ENCODE measurements at regions of chr10 and their contacts with region 1.

Region 1: GRCh38 chr10:119131512-119132240 is 27.8 kb downstream of the DENND10 start:
- DNase-seq: no peak
- ATAC-seq: peak; percentile 98
- H3K4me3 Mint-ChIP-seq: peak overlapping the region; percentile 81
- H3K27ac Mint-ChIP-seq: peak overlapping the region; percentile 92
- H3K4me1 Mint-ChIP-seq: peaks cover 53% of the 10 kb centered on the region
- H3K27me3 Mint-ChIP-seq: no peaks in the 10 kb centered on the region

Region 2: DNA sequence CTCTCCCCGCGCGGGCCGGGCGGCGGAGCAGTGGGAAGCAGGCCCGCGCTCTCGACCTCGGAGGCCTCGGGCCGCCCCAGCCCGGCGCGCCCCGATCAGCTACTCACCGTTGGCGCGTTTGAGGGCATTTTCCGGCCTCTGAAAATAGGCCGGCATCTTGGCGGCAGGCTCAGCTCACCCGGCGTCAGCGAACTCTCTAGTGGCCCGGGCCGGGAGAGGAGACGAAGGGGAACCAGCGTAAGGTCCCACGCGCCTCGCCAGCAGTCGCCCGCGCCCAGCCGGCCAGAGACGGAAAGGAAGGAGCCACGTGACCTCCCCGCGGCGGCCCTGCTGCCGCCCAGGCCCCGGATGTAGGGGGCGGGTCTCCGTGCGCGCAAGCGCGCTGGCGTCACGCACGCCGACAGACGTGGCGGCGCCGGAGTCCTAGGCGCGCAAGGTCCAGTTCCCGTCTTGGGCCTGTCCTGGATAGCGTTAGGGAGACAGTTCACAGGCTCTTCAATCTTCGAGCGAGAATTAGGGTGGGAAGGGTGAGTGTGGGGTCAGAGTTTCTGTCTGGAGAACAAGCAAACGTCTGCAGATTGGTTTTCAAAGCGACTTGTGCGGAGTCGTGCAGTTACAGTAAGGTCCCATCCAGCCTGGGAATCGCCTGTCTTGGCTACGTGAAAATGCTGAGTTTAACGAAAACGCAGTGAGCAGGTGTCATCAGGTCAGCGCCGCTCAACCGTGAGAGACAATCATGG is 51.0 kb before region 1 on chr10 and contains the start of gene EIF3A:
- POLR2A ChIA-PET with region 1: interaction called, 13 read pairs
- DNase-seq: peak; percentile 98
- ATAC-seq: peak; percentile 78
- H3K4me3 Mint-ChIP-seq: peak within 1 kb of the TSS; percentile 95
- H3K27ac Mint-ChIP-seq: peak within 1 kb of the TSS; percentile 99
- H3K4me1 Mint-ChIP-seq: peaks cover 33% of the 10 kb centered on the region
- H3K27me3 Mint-ChIP-seq: no peaks in the 10 kb centered on the region
- total RNA-seq, gene EIF3A: 105 to 111 TPM

Region 3: GRCh38 chr10:119165171-119166110 is 33.8 kb after region 1 on chr10 and contains the start of gene SFXN4:
- POLR2A ChIA-PET with region 1: interaction called, 11 read pairs
- DNase-seq: peak; percentile 92
- ATAC-seq: peak; percentile 91
- H3K4me3 Mint-ChIP-seq: peak within 1 kb of the TSS; percentile 92
- H3K27ac Mint-ChIP-seq: peak within 1 kb of the TSS; percentile 96
- H3K4me1 Mint-ChIP-seq: peaks cover 29% of the 10 kb centered on the region
- H3K27me3 Mint-ChIP-seq: no peaks in the 10 kb centered on the region
- total RNA-seq, gene SFXN4: 23.2 to 24.1 TPM

Region 4: GRCh38 chr10:119270762-119271366 is 139.2 kb after region 1 on chr10:
- POLR2A ChIA-PET with region 1: no interaction called
- DNase-seq: peak; percentile 66
- ATAC-seq: peak; percentile 48
- H3K4me3 Mint-ChIP-seq: peak overlapping the region; percentile 59
- H3K27ac Mint-ChIP-seq: peak overlapping the region; percentile 30
- H3K4me1 Mint-ChIP-seq: peaks cover 44% of the 10 kb centered on the region
- H3K27me3 Mint-ChIP-seq: no peaks in the 10 kb centered on the region